ENCODE measurements at regions of chr16 and their contacts with region 1.

Region 1: DNA sequence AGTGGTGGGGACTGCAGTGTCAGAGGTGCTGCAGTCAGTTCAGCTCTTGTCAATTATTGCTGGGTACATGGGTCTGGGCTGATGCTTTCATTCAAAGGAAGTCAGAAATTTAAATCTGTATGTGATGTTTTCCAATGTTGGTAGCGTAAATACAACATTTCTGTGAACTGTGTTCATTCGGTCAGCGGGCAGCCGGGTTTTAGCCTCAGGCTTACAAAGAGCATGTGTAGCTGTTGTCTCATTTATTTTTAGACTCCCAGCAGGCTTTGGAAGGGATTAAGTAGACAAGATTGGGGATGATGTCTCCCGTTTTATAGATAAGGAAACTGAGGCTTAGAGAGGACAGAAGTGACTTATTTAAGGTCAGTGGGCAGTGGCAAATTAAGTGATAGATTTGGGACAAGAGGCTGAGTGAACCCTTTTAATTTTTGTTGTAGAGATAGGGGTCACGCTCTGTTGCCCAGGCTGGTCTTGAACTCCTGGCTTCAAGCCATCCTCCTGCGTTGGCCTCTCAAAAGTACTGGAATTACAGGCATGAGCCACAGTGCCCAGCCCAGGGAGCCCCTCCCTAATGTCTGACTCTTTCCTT is 8.1 kb downstream of the AQP8 start:
- DNase-seq: no peak
- ATAC-seq: no peak
- H3K4me3 ChIP-seq: no peak overlapping the region
- H3K4me3 Mint-ChIP-seq: no peak overlapping the region
- H3K27ac ChIP-seq: no peak overlapping the region
- H3K27ac Mint-ChIP-seq: no peak overlapping the region
- H3K4me1 ChIP-seq: no peaks in the 10 kb centered on the region
- H3K4me1 Mint-ChIP-seq: no peaks in the 10 kb centered on the region
- H3K27me3 ChIP-seq: no peaks in the 10 kb centered on the region
- H3K27me3 Mint-ChIP-seq: no peaks in the 10 kb centered on the region
- CTCF ChIP-seq: no peak

Region 2: DNA sequence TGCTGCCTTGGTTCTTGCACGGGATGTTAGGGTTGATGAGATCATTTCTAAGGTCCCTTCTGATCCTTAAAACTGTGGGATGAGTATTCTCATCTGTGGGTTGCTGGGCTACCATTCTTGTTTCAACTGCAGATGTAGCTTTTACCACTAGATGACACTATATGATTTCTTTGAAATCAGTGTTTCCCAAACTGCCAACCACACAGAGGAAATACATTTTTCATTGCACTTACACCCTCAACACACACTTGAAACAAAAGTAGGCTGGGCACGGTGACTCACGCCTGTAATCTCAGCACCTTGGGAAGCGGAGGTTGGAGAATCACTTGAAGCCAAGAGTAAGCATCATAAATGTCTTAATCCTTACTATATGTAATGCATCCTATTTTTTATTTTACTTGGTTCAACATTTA is 98.0 kb before region 1 on chr16:
- CTCF ChIA-PET with region 1: interaction called, 11 read pairs
- POLR2A ChIA-PET with region 1: no interaction called
- intact Hi-C with region 1: loop called (anchors 1 to 2 kb)
- DNase-seq: peak in 3 of 9 experiments; percentile 12 to 63 (median 40)
- ATAC-seq: peak; percentile 38
- H3K4me3 ChIP-seq: no peak overlapping the region
- H3K4me3 Mint-ChIP-seq: no peak overlapping the region
- H3K27ac ChIP-seq: no peak overlapping the region
- H3K27ac Mint-ChIP-seq: peak overlapping the region; percentile 3
- H3K4me1 ChIP-seq: peaks cover 9% of the 10 kb centered on the region
- H3K4me1 Mint-ChIP-seq: peaks cover 30% of the 10 kb centered on the region
- H3K27me3 ChIP-seq: no peaks in the 10 kb centered on the region
- H3K27me3 Mint-ChIP-seq: no peaks in the 10 kb centered on the region
- CTCF ChIP-seq: peak; percentile 41

Region 3: DNA sequence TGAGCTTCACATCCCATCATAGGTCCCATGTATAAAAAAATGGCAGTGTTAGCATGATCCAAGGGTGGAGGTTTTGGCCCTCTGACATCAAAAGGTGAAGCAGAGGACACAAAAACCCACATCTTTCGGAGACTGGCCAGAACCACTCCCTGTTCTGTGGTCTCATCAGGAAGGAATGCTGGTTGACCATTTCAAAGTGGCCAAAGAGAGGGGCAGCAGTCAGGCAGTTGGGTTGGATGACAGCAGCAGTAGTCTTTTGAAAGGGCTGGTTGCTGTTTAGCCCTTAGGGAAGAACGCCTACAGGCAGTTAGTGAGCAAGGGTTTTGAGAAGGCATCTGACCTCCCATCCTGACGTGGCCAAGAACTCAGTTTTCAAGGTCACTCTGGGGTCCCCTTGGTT is 72.8 kb before region 1 on chr16:
- CTCF ChIA-PET with region 1: no interaction called
- POLR2A ChIA-PET with region 1: no interaction called
- intact Hi-C with region 1: no loop called
- DNase-seq: no peak
- ATAC-seq: no peak
- H3K4me3 ChIP-seq: no peak overlapping the region
- H3K4me3 Mint-ChIP-seq: no peak overlapping the region
- H3K27ac ChIP-seq: no peak overlapping the region
- H3K27ac Mint-ChIP-seq: no peak overlapping the region
- H3K4me1 ChIP-seq: no peaks in the 10 kb centered on the region
- H3K4me1 Mint-ChIP-seq: peaks cover 8% of the 10 kb centered on the region
- H3K27me3 ChIP-seq: no peaks in the 10 kb centered on the region
- H3K27me3 Mint-ChIP-seq: no peaks in the 10 kb centered on the region
- CTCF ChIP-seq: no peak

Region 4: DNA sequence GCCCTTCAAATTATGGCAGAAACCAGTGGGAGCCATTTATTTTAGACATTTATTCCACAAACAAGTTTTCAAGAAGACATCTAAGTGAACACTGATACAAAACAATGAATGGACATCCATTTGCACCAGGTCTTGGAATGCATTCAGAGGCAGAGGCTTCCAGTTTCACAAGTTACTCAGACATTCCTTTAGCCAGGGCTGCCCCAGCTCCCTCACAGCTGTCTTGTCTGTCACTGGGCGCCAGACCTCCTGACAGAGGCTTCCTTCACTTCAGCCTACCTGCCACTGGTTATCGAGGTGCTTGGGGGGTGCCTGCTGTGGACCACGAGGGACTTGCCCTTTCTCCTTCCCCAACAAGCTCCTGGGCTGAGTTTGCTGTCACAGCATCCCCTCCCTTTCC is 11.2 kb after region 1 on chr16:
- CTCF ChIA-PET with region 1: interaction called, 15 read pairs
- POLR2A ChIA-PET with region 1: no interaction called
- intact Hi-C with region 1: no loop called
- DNase-seq: no peak
- ATAC-seq: no peak
- H3K4me3 ChIP-seq: no peak overlapping the region
- H3K4me3 Mint-ChIP-seq: no peak overlapping the region
- H3K27ac ChIP-seq: no peak overlapping the region
- H3K27ac Mint-ChIP-seq: no peak overlapping the region
- H3K4me1 ChIP-seq: no peaks in the 10 kb centered on the region
- H3K4me1 Mint-ChIP-seq: peaks cover 3% of the 10 kb centered on the region
- H3K27me3 ChIP-seq: no peaks in the 10 kb centered on the region
- H3K27me3 Mint-ChIP-seq: no peaks in the 10 kb centered on the region
- CTCF ChIP-seq: no peak

Region 5: DNA sequence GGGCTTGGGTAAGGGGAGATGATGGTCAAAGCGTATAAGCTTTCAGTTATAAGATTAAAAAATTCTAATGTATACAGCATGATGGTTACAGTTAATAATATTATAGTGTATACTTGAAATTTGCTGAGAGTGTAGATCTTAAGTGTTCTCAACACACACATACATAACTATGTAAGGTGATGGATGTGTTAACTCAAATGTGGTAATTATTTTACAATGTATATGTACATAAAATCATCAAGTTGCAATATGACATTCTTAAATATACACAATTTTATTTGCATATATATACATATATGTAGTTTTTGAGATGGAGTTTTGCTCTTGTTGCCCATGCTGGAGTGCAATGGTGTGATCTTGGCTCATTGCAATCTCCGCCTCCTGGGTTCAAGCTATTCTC is 25.6 kb after region 1 on chr16:
- CTCF ChIA-PET with region 1: interaction called, 6 read pairs
- POLR2A ChIA-PET with region 1: no interaction called
- intact Hi-C with region 1: loop called in 1 of 2 experiments (anchors 1 kb)
- DNase-seq: no peak
- ATAC-seq: no peak
- H3K4me3 ChIP-seq: no peak overlapping the region
- H3K4me3 Mint-ChIP-seq: no peak overlapping the region
- H3K27ac ChIP-seq: no peak overlapping the region
- H3K27ac Mint-ChIP-seq: no peak overlapping the region
- H3K4me1 ChIP-seq: peaks cover 3% of the 10 kb centered on the region
- H3K4me1 Mint-ChIP-seq: peaks cover 12% of the 10 kb centered on the region
- H3K27me3 ChIP-seq: no peaks in the 10 kb centered on the region
- H3K27me3 Mint-ChIP-seq: no peaks in the 10 kb centered on the region
- CTCF ChIP-seq: no peak

Region 6: DNA sequence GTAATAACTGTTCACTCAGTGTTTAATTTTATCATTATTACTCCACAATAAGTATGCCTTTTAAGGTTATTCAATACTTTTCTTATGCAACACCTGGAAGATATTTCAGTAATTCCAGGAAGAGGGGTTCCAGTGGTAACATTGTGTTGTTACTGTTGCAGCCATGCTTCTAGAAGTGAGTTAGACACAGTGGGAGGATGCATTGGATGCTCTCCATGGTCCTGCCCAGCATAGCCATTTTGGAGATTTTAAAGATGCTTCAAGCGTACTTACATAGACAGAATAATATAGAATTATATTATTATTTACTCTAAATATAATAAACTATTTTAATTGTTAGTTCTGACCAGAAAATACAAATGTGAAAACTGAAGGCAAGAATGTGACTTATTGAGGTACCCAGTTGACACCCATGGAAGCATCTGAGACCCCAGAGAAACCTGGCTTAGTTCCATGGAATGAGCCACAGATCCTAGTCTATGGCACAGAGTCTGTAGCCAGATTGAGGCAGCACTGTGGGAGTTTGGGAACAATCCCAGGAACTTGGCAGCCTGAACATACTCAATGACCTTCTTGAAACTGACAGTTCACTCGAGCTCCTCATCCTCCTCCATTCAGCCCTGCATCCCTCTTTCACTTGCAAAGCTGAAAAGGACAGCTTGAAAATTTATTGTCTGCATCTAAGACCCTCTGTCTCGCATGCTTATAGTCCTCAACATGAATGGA is 276.9 kb after region 1 on chr16:
- CTCF ChIA-PET with region 1: no interaction called
- POLR2A ChIA-PET with region 1: no interaction called
- intact Hi-C with region 1: no loop called
- DNase-seq: no peak
- ATAC-seq: no peak
- H3K4me3 ChIP-seq: no peak overlapping the region
- H3K4me3 Mint-ChIP-seq: no peak overlapping the region
- H3K27ac ChIP-seq: no peak overlapping the region
- H3K27ac Mint-ChIP-seq: no peak overlapping the region
- H3K4me1 ChIP-seq: no peaks in the 10 kb centered on the region
- H3K4me1 Mint-ChIP-seq: no peaks in the 10 kb centered on the region
- H3K27me3 ChIP-seq: no peaks in the 10 kb centered on the region
- H3K27me3 Mint-ChIP-seq: peaks cover 2% of the 10 kb centered on the region
- CTCF ChIP-seq: no peak

Measured in CD8-positive, alpha-beta T cell (primary cell).